ENCODE measurements at regions of chr1 and their contacts with region 1.

Region 1: GRCh38 chr1:220272047-220272840 is at the start of gene RAB3GAP2:
- DNase-seq: peak; percentile 98
- ATAC-seq: peak; percentile 94
- H3K4me3 ChIP-seq: peak within 1 kb of the TSS; percentile 87 to 96 (median 90)
- H3K4me3 Mint-ChIP-seq: no peak within 1 kb of the TSS
- H3K27ac ChIP-seq: peak within 1 kb of the TSS; percentile 90 to 95
- H3K27ac Mint-ChIP-seq: no peak within 1 kb of the TSS
- H3K4me1 ChIP-seq: peaks cover 27% of the 10 kb centered on the region in 2 donors
- H3K4me1 Mint-ChIP-seq: peaks cover 18% of the 10 kb centered on the region
- H3K27me3 ChIP-seq: no peaks in the 10 kb centered on the region
- H3K27me3 Mint-ChIP-seq: peaks cover 6% of the 10 kb centered on the region
- CTCF ChIP-seq: no peak
- total RNA-seq, gene RAB3GAP2: 70.5 and 72.0 TPM in 2 replicates

Region 2: GRCh38 chr1:220046052-220046930 is 226.0 kb before region 1 on chr1 and contains the start of gene EPRS1:
- CTCF ChIA-PET with region 1: no interaction called
- POLR2A ChIA-PET with region 1: no interaction called
- intact Hi-C with region 1: loop called (anchors 1 kb)
- DNase-seq: peak; percentile 98
- ATAC-seq: peak; percentile 99
- H3K4me3 ChIP-seq: peak within 1 kb of the TSS; percentile 71 to 97 (median 94)
- H3K4me3 Mint-ChIP-seq: peak within 1 kb of the TSS; percentile 90
- H3K27ac ChIP-seq: peak within 1 kb of the TSS; percentile 64 to 83
- H3K27ac Mint-ChIP-seq: peak within 1 kb of the TSS; percentile 90
- H3K4me1 ChIP-seq: peaks cover 9 to 16% of the 10 kb centered on the region in 2 donors
- H3K4me1 Mint-ChIP-seq: peaks cover 27% of the 10 kb centered on the region
- H3K27me3 ChIP-seq: no peaks in the 10 kb centered on the region
- H3K27me3 Mint-ChIP-seq: no peaks in the 10 kb centered on the region
- CTCF ChIP-seq: peak; percentile 78
- total RNA-seq, gene EPRS1: 56.9 and 61.7 TPM in 2 replicates

Region 3: DNA sequence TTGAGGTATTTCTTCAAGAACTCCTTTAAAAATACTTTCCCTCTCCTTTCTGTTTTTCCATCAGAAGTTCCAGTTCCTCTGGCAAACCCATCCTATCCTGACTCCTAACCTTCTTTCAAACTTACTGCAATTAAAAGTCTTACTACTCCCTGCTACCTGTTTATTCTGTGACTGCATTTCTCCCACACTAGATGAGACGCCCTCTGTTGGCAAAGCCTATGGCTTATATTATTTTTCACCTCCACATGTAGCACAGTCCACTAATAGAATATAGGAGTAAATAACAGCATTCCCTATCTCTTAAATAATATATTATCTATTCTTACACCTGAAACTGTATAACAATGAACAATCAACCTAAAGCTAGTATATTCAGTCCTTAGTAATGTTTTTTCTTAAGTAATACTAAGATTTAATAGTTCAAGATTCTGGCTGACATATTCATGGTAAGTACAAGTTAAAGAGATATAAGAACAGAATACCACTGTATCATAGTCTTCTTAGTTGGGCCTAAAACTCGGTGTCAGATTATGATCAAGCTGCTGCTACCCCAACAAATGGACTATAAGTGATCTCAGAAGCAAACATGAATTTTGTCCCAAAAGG is 54.8 kb before region 1 on chr1:
- CTCF ChIA-PET with region 1: interaction called, 12 read pairs
- POLR2A ChIA-PET with region 1: interaction called, 3 read pairs
- intact Hi-C with region 1: loop called (anchors 1 kb)
- DNase-seq: peak; percentile 29
- ATAC-seq: no peak
- H3K4me3 ChIP-seq: no peak overlapping the region
- H3K4me3 Mint-ChIP-seq: no peak overlapping the region
- H3K27ac ChIP-seq: no peak overlapping the region
- H3K27ac Mint-ChIP-seq: peak overlapping the region; percentile 3
- H3K4me1 ChIP-seq: peaks cover 18 to 31% of the 10 kb centered on the region in 2 donors
- H3K4me1 Mint-ChIP-seq: peaks cover 48% of the 10 kb centered on the region
- H3K27me3 ChIP-seq: no peaks in the 10 kb centered on the region
- H3K27me3 Mint-ChIP-seq: no peaks in the 10 kb centered on the region
- CTCF ChIP-seq: peak; percentile 61

Region 4: GRCh38 chr1:220690140-220691025 is 418.1 kb after region 1 on chr1 and contains the start of gene C1orf115:
- CTCF ChIA-PET with region 1: no interaction called
- POLR2A ChIA-PET with region 1: no interaction called
- intact Hi-C with region 1: loop called (anchors 5 kb)
- DNase-seq: peak; percentile 89
- ATAC-seq: peak; percentile 98
- H3K4me3 ChIP-seq: peak within 1 kb of the TSS in 4 of 5 experiments; percentile 47 to 83 (median 70)
- H3K4me3 Mint-ChIP-seq: peak within 1 kb of the TSS; percentile 93
- H3K27ac ChIP-seq: peak within 1 kb of the TSS in 1 of 2 donors; percentile 49
- H3K27ac Mint-ChIP-seq: peak within 1 kb of the TSS; percentile 87
- H3K4me1 ChIP-seq: peaks cover 14 to 19% of the 10 kb centered on the region in 2 donors
- H3K4me1 Mint-ChIP-seq: peaks cover 21% of the 10 kb centered on the region
- H3K27me3 ChIP-seq: peaks cover 0 to 4% (median 0%) of the 10 kb centered on the region in 4 experiments
- H3K27me3 Mint-ChIP-seq: peaks cover 3% of the 10 kb centered on the region
- CTCF ChIP-seq: peak; percentile 99
- total RNA-seq, gene C1orf115: 19.5 and 21.4 TPM in 2 replicates

Region 5: DNA sequence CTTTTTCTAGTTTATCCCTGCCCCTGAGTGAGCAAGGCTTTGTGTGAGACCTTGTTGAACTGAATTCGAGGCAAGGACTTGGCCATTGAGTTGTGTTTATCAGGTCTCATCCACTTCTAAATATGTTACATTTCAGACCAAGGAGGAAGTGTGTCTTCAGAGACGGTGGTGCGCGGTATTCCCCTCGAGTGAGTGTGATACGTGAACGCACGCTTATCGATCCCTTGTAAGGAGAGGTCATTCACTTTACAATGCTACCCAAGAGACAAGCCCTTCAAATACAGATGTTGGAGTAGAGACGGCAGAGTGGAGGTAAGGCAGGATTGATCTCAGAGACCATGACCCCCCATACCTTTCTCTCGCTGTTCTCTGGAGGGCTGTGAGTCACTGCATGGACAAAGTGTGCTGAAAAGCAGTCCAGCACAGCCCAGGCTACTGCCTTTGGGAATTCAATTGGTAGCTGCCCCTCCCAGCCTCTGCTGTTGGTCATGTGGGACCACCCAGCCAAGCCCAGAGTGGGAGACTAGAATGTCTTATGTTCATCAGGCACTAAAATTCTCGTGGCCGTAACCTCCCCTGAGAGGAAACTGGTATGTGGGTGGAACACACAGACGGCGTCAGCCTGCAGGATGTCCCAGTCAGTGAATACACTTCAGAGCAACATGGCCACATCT is 498.1 kb after region 1 on chr1:
- CTCF ChIA-PET with region 1: no interaction called
- POLR2A ChIA-PET with region 1: no interaction called
- intact Hi-C with region 1: loop called (anchors 1 kb)
- DNase-seq: peak; percentile 80
- ATAC-seq: peak; percentile 87
- H3K4me3 ChIP-seq: peak overlapping the region in 4 of 5 experiments; percentile 43 to 78 (median 55)
- H3K4me3 Mint-ChIP-seq: peak overlapping the region; percentile 89
- H3K27ac ChIP-seq: peak overlapping the region; percentile 99 to 100
- H3K27ac Mint-ChIP-seq: peak overlapping the region; percentile 99
- H3K4me1 ChIP-seq: peaks cover 21% of the 10 kb centered on the region in 2 donors
- H3K4me1 Mint-ChIP-seq: peaks cover 42% of the 10 kb centered on the region
- H3K27me3 ChIP-seq: no peaks in the 10 kb centered on the region
- H3K27me3 Mint-ChIP-seq: no peaks in the 10 kb centered on the region
- CTCF ChIP-seq: no peak

Measured in B cell (primary cell).